ENCODE measurements at regions of chr18 and their contacts with region 1.

Region 1: DNA sequence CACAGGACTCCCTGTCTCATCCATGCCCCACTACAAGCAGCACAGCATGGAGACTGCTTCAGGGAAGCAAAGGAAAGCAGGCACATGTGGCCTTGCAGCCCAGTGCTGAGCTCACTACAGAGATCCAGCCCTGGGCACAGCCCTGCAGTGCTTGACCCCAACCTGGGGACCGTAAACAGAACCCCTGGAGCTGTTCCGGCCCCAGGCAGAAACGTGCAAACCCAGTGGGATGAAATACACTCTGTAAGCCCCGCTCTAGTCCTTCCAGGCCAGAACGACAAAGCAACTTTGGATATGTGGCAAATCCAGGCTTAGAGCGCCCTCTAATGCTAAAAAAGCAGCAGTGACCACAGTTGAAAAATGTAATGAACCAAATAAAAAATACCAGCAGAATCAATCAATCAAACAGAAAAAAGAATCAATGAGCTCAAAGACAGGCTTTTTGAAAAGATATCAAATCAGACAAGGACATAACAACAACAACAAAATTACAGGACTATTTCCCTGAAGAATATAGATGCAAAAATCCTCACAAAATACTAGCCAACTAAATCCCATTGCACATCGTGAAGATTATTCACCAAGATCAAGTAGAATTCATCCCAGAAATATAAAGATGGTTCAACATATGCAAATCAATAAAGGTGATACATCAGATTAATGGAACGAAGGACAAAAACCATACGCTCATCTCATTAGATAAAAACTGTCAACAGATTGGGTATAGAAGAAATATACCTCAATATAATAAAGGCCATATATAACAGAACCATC is 45.6 kb downstream of the ZNF519 start:
- DNase-seq: no peak
- H3K4me3 Mint-ChIP-seq: no peak overlapping the region
- H3K27ac Mint-ChIP-seq: no peak overlapping the region
- H3K4me1 Mint-ChIP-seq: no peaks in the 10 kb centered on the region
- H3K27me3 Mint-ChIP-seq: no peaks in the 10 kb centered on the region

Region 2: GRCh38 chr18:13823707-13824395 is 262.8 kb before region 1 on chr18 and contains the start of gene MC5R:
- CTCF ChIA-PET with region 1: interaction called, 14 read pairs
- POLR2A ChIA-PET with region 1: no interaction called
- DNase-seq: peak; percentile 70
- H3K4me3 Mint-ChIP-seq: peak within 1 kb of the TSS; percentile 19
- H3K27ac Mint-ChIP-seq: no peak within 1 kb of the TSS
- H3K4me1 Mint-ChIP-seq: peaks cover 6% of the 10 kb centered on the region
- H3K27me3 Mint-ChIP-seq: peaks cover 20% of the 10 kb centered on the region
- total RNA-seq, gene MC5R: not detected

Measured in activated CD4-positive, alpha-beta memory T cell treated with anti-CD3 and anti-CD28 coated beads, Interleukin-2, amount 10 ng/mL, durations not matched to agents 7 days and 5 days (primary cell).